Activated CD8-positive, alpha-beta T cell treated with anti-CD3 and anti-CD28 coated beads, Interleukin-2, amount 10 ng/mL, durations not matched to agents 7 days and 5 days (primary cell): ENCODE measurements at regions of chr3 and their contacts with region 1.

Region 1: GRCh38 chr3:156664831-156665178 is 9.6 kb upstream of the TIPARP start:
- DNase-seq: no peak
- ATAC-seq: peak; percentile 65
- H3K4me3 Mint-ChIP-seq: peak overlapping the region; percentile 58
- H3K27ac Mint-ChIP-seq: peak overlapping the region; percentile 91
- H3K4me1 Mint-ChIP-seq: peaks cover 74% of the 10 kb centered on the region
- H3K27me3 Mint-ChIP-seq: no peaks in the 10 kb centered on the region

Region 2: DNA sequence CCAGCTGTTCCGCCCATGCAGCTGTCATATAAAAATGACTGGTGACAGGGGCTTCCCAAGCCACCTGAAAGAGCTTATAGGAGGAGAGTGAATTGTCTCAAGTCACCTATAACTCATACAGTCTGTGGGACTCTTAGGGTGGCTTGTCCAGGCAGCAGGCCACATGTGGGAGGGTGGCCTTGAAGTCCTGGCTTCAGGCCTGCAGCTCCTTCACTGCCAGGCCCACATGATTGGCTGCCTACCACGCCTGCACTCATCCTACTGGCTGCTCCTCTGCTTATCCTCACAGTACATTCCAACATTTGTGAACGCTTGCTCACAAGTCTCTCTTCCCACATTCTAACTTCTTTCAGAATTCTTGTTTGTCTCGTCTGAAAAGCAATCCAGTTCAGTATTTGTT is 31.5 kb before region 1 on chr3:
- CTCF ChIA-PET with region 1: no interaction called
- POLR2A ChIA-PET with region 1: no interaction called
- DNase-seq: no peak
- ATAC-seq: no peak
- H3K4me3 Mint-ChIP-seq: no peak overlapping the region
- H3K27ac Mint-ChIP-seq: no peak overlapping the region
- H3K4me1 Mint-ChIP-seq: no peaks in the 10 kb centered on the region
- H3K27me3 Mint-ChIP-seq: peaks cover 2% of the 10 kb centered on the region

Region 3: GRCh38 chr3:156643729-156644389 is 20.9 kb before region 1 on chr3:
- CTCF ChIA-PET with region 1: interaction called, 9 read pairs
- POLR2A ChIA-PET with region 1: interaction called, 10 read pairs
- DNase-seq: peak; percentile 74
- ATAC-seq: peak; percentile 92
- H3K4me3 Mint-ChIP-seq: peak overlapping the region; percentile 48
- H3K27ac Mint-ChIP-seq: peak overlapping the region; percentile 85
- H3K4me1 Mint-ChIP-seq: peaks cover 31% of the 10 kb centered on the region
- H3K27me3 Mint-ChIP-seq: peaks cover 2% of the 10 kb centered on the region

Region 4: DNA sequence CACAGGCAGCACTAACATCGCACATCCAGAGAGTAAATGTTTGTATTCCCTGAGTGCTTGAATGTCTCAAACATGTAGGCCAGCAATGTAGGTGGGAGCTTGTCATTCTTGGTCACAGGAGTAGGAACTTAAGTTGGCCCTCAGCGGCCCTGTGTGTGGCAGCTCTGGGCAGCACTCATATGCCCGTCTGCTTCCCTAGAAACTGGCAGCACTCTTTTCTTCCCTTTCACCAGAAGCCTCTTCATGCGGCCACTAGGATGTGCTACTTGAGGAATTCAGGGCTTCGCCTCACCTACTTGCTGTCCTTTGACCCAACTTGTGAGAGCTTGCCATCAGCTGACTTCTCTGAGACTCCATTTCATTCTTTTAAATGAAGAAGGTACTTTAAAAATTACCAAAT is 79.1 kb after region 1 on chr3:
- CTCF ChIA-PET with region 1: no interaction called
- POLR2A ChIA-PET with region 1: no interaction called
- DNase-seq: no peak
- ATAC-seq: no peak
- H3K4me3 Mint-ChIP-seq: no peak overlapping the region
- H3K27ac Mint-ChIP-seq: no peak overlapping the region
- H3K4me1 Mint-ChIP-seq: peaks cover 4% of the 10 kb centered on the region
- H3K27me3 Mint-ChIP-seq: no peaks in the 10 kb centered on the region